Right ventricle myocardium inferior (tissue), 1 donor: ENCODE measurements at regions of chr22 and their contacts with region 1.

Region 1: GRCh38 chr22:19432133-19432851 is at the start of gene MRPL40:
- DNase-seq: peak; percentile 98
- ATAC-seq: peak; percentile 98
- total RNA-seq, gene MRPL40: 60.4 TPM

Region 2: GRCh38 chr22:19143967-19144400 is 288.3 kb before region 1 on chr22:
- intact Hi-C with region 1: loop called (anchors 10 kb)
- DNase-seq: no peak
- ATAC-seq: no peak

Region 3: DNA sequence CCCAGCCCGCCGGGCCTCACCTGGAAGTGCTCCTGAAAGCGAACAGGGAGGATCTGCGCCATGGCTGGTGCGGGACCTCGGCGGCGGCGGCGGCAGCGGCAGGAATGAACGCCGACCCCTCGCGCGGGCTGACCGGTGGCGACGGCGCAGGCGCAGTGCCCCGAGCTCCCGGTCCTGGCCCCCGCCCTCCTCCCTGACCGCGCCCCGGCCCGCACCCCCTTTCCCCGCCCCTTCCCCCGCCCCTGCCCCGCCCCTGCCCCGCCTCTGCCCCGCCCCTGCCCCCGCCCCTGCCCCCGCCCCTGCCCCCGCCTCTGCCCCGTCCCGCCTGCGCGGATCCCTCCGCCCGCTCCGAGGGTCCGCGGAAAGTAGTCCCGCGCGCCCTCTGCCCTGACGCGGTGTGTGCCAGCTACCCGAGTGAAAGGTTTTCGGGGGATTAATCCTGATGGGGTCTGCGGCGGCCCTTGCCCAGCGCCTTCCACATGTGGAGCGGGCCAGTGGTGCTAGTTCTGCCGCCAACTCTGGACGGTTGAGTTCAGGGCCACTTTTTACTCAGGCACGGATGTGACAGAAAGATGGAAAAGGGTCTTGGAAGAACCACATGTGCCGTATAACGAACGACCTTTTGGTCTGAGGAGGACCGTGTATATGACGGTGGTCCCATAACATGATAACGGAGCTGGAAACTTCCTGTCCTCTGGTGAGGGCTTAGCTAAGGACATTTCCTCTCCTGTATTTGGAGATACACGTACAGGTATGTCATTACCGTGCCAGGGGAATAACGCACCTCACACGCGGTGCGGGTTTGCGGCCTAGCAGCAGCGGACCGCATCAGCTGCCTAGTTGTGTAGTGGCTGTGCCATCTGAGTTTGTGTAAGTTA is 140.5 kb before region 1 on chr22 and contains the start of gene CLTCL1:
- intact Hi-C with region 1: loop called (anchors 5 kb)
- DNase-seq: peak; percentile 92
- ATAC-seq: peak; percentile 90
- total RNA-seq, gene CLTCL1: 8.3 TPM

Region 4: DNA sequence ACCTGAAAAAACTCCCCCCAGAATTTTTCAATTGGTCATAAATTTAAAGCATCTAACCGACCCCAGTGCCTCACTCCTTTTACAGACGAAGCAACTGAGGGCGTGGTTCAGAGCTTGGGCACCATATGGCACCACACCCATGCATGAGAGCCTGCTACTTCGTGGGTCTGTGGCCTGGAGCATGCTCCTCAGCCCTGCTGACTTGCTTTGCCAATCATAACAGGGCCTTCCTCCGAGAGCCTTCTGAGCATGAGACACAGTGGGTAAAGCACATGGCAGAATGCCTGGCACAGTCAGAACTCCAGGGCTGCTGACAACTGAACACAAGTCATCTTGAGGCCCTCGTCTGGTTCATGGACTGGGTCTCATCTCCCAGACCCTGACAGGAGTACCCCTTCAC is 34.1 kb before region 1 on chr22:
- intact Hi-C with region 1: no loop called
- DNase-seq: no peak
- ATAC-seq: no peak

Region 5: DNA sequence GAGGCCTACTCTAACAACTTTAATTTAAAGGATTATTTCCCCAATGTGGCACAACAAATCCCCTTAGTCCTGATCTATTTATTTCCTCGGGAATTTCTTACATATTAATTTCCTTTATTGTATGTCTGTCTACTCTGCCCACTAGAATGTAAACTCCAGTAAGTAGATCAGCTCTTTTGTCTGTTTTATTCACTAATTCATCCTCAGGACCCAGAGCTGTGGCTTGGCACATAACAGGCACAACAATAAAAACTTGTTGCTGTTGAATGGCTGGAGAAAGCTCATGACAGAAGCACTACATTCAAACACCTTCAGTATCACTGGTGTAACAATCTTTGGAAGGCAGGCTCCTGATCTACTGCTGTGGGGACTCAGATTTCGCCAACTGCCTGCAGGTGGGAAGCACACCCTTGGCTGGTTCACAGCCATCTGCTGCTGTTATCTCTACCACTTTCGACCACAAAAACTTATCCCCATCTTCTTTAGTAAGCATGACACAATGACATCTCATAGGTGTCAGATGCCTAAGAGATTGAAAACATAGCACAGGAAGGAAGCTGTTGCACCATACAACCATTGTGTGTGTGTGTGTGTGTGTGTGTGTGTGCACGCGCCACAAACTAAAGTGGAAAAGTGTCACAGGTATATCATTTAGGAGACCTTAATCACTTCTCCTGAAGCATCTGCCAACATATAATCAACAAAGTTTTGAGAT is 12.7 kb before region 1 on chr22:
- intact Hi-C with region 1: no loop called
- DNase-seq: no peak
- ATAC-seq: no peak

Region 6: GRCh38 chr22:19447388-19448075 is 15.2 kb after region 1 on chr22 and contains the start of gene C22orf39:
- intact Hi-C with region 1: loop called (anchors 1 kb)
- DNase-seq: peak; percentile 94
- ATAC-seq: peak; percentile 94
- total RNA-seq, gene C22orf39: 63.3 TPM

Region 7: GRCh38 chr22:19479357-19480172 is 47.3 kb after region 1 on chr22 and contains the start of gene CDC45:
- intact Hi-C with region 1: loop called (anchors 2 kb)
- DNase-seq: peak; percentile 97
- ATAC-seq: peak; percentile 97
- total RNA-seq, gene CDC45: 0.76 TPM

Region 8: GRCh38 chr22:20069331-20070042 is 637.2 kb after region 1 on chr22:
- intact Hi-C with region 1: loop called (anchors 5 kb)
- DNase-seq: no peak
- ATAC-seq: no peak